Activated CD8-positive, alpha-beta memory T cell treated with anti-CD3 and anti-CD28 coated beads, Interleukin-2, amount 10 ng/mL, durations not matched to agents 7 days and 5 days (primary cell): ENCODE measurements at regions of chr17 and their contacts with region 1.

Region 1: GRCh38 chr17:17681187-17681848 is at the start of gene RAI1:
- DNase-seq: peak; percentile 75
- ATAC-seq: peak; percentile 72
- H3K4me3 Mint-ChIP-seq: peak within 1 kb of the TSS; percentile 85
- H3K27ac Mint-ChIP-seq: peak within 1 kb of the TSS; percentile 83
- H3K4me1 Mint-ChIP-seq: peaks cover 37% of the 10 kb centered on the region
- H3K27me3 Mint-ChIP-seq: peaks cover 13% of the 10 kb centered on the region
- total RNA-seq, gene RAI1: 17.4 to 24.4 TPM

Region 2: GRCh38 chr17:17591355-17592298 is 89.7 kb before region 1 on chr17 and contains the start of gene PEMT:
- CTCF ChIA-PET with region 1: no interaction called
- DNase-seq: peak; percentile 98
- ATAC-seq: peak; percentile 96
- H3K4me3 Mint-ChIP-seq: peak within 1 kb of the TSS; percentile 84
- H3K27ac Mint-ChIP-seq: peak within 1 kb of the TSS; percentile 90
- H3K4me1 Mint-ChIP-seq: peaks cover 22% of the 10 kb centered on the region
- H3K27me3 Mint-ChIP-seq: no peaks in the 10 kb centered on the region
- total RNA-seq, gene PEMT: 17.5 to 18.6 TPM

Region 3: GRCh38 chr17:17691468-17692263 is 10.3 kb after region 1 on chr17:
- CTCF ChIA-PET with region 1: interaction called, 10 read pairs
- DNase-seq: no peak
- ATAC-seq: no peak
- H3K4me3 Mint-ChIP-seq: no peak overlapping the region
- H3K27ac Mint-ChIP-seq: peak overlapping the region; percentile 32
- H3K4me1 Mint-ChIP-seq: peaks cover 50% of the 10 kb centered on the region
- H3K27me3 Mint-ChIP-seq: no peaks in the 10 kb centered on the region